ENCODE measurements at regions of chr1 and their contacts with region 1.

Region 1: GRCh38 chr1:26723013-26723991 is 27.5 kb downstream of the ARID1A start:
- DNase-seq: peak; percentile 83
- H3K4me3 Mint-ChIP-seq: peak overlapping the region; percentile 43
- H3K27ac Mint-ChIP-seq: peak overlapping the region; percentile 49
- H3K4me1 Mint-ChIP-seq: peaks cover 79% of the 10 kb centered on the region
- H3K27me3 Mint-ChIP-seq: no peaks in the 10 kb centered on the region

Region 2: DNA sequence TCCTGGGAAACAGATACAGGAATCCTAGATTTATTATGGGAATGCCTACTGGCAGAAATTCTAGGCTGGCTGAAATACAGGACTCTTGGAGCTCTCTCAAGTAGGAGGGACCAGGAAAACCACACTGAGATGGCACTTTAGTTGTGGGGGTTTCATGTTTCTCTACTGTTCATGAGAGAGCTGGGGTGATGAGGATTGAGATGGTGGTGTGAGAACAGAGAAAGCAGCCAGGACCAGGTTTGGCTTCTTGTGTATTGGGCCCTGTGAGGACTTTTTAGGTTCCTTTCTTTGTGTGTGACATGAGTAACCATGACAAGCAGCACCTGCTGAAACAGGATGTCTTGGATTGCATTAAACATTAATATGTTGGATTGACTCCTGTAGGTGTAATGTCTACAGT is 22.6 kb before region 1 on chr1:
- intact Hi-C with region 1: loop called (anchors 2 kb)
- DNase-seq: no peak
- H3K4me3 Mint-ChIP-seq: no peak overlapping the region
- H3K27ac Mint-ChIP-seq: no peak overlapping the region
- H3K4me1 Mint-ChIP-seq: peaks cover 7% of the 10 kb centered on the region
- H3K27me3 Mint-ChIP-seq: no peaks in the 10 kb centered on the region

Region 3: DNA sequence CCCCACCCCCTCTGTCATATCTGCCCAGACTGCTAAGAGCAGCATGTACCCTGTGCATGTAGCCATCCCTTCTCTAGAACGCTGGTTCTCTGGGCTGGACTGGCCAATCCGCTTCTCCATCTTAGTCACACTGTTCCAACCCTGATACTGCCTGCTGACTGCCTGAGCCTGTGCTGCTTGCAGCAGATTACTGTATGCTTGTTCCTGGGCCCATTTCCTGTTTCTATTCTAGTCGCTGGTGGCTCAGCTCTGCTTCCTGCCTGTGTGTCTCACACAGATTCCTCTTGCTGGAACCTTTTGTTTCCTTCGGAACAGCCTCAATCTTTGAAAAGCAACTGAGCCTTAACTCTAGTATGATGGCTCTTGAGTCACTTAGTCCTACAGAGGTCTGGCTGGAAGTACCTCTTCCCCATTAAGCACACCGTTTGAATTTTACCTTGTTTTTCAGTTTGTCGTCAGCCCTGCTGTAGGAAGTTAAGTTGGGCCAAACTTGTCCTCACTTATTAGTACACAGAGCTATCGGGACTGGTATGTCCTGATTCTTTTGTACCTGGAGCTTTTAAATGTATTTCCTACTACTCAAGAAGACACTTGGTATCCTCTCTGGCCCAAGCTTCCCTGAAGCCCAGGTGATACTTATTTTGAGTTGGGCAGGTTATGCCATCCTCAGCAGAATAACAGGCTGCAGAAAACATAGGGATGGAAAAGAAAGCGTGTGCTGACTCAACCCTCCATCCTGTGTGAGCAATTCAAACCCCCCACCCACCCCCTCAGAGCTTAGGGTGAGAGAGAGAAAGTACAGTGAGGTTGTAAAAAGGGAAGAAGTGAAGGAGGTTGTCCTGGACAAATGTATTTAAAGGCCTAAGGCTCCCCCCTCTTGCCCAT is 21.0 kb after region 1 on chr1:
- intact Hi-C with region 1: loop called (anchors 1 kb)
- DNase-seq: peak; percentile 95
- H3K4me3 Mint-ChIP-seq: peak overlapping the region; percentile 72
- H3K27ac Mint-ChIP-seq: peak overlapping the region; percentile 89
- H3K4me1 Mint-ChIP-seq: peaks cover 75% of the 10 kb centered on the region
- H3K27me3 Mint-ChIP-seq: no peaks in the 10 kb centered on the region

Region 4: GRCh38 chr1:26853156-26853555 is 129.9 kb after region 1 on chr1:
- intact Hi-C with region 1: no loop called
- DNase-seq: peak; percentile 93
- H3K4me3 Mint-ChIP-seq: no peak overlapping the region
- H3K27ac Mint-ChIP-seq: no peak overlapping the region
- H3K4me1 Mint-ChIP-seq: peaks cover 1% of the 10 kb centered on the region
- H3K27me3 Mint-ChIP-seq: no peaks in the 10 kb centered on the region

Measured in activated CD4-positive, alpha-beta T cell treated with anti-CD3 and anti-CD28 coated beads, Interleukin-2, amount 10 ng/mL, durations not matched to agents 24 days and 14 days (primary cell).